Heart right ventricle (tissue), 16 donors: ENCODE measurements at regions of chr11 and their contacts with region 1.

Region 1: GRCh38 chr11:32698579-32698978 is 95.9 kb downstream of the CCDC73 start:
- DNase-seq: no peak
- ATAC-seq: no peak
- H3K4me3 ChIP-seq: no peak overlapping the region
- H3K27ac ChIP-seq: no peak overlapping the region
- H3K4me1 ChIP-seq: peaks cover 0 to 3% (median 0%) of the 10 kb centered on the region in 9 donors
- H3K27me3 ChIP-seq: no peaks in the 10 kb centered on the region
- CTCF ChIP-seq: no peak

Region 2: DNA sequence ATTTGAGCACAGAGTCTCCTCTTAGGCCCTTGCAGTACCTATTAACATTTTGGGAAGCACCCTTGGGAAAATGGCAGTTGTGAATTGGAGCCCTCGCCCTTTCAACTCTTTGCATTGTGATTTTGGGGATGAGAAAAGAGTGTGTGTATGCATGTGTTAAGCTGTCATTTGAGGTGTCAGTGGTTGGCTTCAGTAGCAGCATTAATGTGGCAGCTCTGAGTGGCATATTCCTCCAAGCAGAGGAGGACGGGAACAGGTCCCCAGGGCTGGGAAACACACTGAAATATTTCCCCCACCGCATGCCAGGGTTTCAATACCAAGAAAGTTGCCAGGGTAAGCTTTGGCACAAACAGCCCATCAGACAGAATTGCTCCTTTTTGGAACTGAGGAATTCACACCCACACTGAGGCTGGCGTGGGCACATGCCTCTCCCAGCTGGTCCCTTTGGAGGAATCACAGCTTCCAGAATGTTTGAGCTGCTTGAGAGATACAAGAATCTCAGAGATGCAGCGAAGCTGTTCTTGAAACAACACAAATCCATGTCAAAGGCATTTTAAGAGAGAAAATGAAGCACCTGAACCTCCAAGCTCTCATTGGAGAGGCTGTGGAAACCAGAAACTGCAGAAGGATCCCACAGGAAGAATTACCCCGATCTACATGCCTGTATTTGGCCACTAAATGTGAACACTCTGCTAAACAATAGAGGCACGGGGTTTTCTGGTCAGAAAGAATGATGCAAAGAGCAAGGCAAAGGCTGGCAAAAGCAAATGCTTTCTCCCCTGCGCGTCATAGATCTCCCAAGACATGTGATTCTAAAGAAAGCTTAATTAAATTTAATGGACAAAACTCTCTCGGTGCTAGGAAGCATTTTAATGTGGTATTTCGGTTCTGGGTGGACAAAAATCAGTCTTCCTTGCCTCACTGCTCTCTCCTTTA is 674.9 kb before region 1 on chr11:
- intact Hi-C with region 1: no loop called
- DNase-seq: no peak
- ATAC-seq: no peak
- H3K4me3 ChIP-seq: no peak overlapping the region
- H3K27ac ChIP-seq: no peak overlapping the region
- H3K4me1 ChIP-seq: no peaks in the 10 kb centered on the region
- H3K27me3 ChIP-seq: peaks cover 0 to 15% (median 4%) of the 10 kb centered on the region in 7 donors
- CTCF ChIP-seq: no peak

Region 3: DNA sequence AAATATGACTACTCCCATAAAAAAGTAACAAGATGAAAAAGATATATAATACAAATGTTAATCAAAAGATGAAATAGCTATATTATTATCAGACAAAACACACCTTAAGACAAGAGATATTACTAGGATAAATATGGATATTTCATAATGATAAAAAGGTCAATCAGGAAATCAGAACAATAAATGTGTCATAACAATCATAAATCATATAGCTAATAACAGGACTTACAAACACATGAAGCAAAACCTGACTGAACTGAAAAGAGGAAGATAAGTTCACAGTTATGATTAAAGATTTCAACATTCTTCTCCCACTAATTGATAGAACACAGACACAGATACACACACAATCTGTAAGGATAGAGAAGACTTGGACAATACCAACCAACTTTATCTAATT is 67.7 kb before region 1 on chr11:
- intact Hi-C with region 1: loop called in 1 of 10 experiments (anchors 10 kb)
- DNase-seq: no peak
- ATAC-seq: no peak
- H3K4me3 ChIP-seq: no peak overlapping the region
- H3K27ac ChIP-seq: no peak overlapping the region
- H3K4me1 ChIP-seq: no peaks in the 10 kb centered on the region
- H3K27me3 ChIP-seq: no peaks in the 10 kb centered on the region
- CTCF ChIP-seq: no peak